Cardiac septum (tissue), 1 donor: ENCODE measurements at regions of chr13 and their contacts with region 1.

Region 1: GRCh38 chr13:102845630-102846260 is at the start of gene ERCC5:
- DNase-seq: peak; percentile 95
- total RNA-seq, gene ERCC5: 36.5 TPM

Region 2: DNA sequence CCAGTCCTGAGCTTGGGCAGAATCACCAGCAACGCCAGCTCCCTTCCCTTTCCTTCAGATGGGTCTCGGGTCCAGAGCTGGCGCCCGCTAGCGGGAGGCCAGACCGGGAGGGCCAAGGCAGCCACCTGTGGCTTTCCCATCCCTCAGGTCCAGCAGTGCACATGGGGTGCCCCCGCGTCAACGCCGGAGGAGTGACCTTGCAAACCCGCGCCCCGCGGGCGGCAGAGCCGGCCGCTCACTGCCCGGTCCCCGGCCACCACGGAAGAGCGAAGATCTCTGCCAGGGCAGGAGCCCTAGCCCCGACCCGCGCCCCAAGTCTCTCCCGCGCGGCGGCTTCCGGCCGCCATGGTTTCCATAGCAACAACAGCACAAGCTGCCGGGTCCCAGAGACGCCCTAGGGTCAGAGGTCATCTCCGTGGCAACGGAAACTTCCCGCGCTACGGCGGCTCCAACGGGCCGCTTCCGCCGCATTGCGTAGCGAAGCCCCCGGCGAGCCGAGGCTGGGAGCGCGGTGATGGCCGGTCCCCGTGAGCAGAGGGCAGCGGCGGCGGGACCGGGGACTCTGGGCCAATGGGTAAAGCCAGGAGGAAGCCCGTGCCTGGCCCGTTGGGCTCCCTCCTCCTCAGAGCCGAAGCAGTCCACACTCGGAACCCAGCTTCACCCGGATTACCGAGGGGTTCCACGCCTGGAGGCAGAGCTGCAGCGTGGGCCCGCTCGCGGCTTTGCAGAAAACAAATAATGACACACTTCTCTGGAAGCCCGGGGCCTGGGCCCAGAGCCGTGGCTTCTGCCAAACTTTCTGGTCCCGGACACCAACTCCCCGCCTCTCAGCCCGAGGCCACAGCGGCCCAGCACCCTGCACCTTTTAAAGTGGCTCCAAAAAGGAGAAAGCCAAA is 451.3 kb before region 1 on chr13:
- intact Hi-C with region 1: loop called (anchors 10 kb)
- DNase-seq: peak; percentile 95

Region 3: GRCh38 chr13:102596147-102597028 is 249.4 kb before region 1 on chr13 and contains the start of gene TPP2:
- intact Hi-C with region 1: loop called (anchors 2 kb)
- DNase-seq: peak; percentile 100
- total RNA-seq, gene TPP2: 31.0 TPM

Region 4: DNA sequence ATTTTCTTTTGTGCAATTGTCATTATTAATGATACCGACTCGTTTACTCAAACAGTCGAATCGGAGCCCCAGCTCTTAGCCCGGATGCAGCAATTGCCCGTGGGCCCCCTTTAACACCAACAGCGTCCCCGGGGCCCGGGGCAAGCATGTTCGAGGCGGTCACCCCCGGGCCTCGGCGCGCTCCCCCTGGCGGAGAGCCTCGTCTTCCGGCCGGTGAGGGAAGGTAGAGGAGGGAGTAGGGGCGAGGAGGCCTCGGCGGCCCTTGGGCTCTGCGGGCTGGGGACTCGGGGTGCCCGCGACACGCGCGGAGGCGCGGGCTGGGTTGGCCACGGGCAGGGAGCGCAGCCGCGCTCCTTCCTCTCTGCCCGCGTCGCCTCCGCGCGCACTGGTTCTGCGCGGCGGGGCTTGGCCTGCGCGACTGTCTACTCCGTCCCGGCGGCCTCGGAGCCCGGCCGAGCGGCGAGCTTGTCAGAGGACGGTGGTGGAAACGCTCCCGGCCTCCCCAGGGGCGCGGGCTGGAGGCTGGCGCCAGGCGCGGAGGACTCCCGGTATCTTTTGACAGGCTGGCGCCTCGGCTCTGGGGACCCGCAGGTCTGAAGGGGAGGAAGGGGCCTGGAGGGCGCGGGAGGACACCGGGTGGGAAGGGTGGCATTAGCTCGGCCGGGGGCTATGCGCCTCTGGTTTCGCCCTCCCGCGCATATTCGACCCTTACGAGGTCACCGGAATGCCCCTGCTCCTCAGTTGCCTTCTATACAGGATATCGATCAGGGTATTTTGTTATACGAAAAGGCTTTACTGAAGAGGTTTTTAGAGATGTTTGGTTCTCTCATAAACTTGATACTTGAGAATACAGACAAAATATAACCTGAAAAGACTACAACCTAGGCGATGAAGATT is 45.4 kb before region 1 on chr13:
- intact Hi-C with region 1: loop called (anchors 2 kb)
- DNase-seq: peak; percentile 87